AG04449 (cell line): ENCODE measurements at regions of chr6 and their contacts with region 1.

Region 1: DNA sequence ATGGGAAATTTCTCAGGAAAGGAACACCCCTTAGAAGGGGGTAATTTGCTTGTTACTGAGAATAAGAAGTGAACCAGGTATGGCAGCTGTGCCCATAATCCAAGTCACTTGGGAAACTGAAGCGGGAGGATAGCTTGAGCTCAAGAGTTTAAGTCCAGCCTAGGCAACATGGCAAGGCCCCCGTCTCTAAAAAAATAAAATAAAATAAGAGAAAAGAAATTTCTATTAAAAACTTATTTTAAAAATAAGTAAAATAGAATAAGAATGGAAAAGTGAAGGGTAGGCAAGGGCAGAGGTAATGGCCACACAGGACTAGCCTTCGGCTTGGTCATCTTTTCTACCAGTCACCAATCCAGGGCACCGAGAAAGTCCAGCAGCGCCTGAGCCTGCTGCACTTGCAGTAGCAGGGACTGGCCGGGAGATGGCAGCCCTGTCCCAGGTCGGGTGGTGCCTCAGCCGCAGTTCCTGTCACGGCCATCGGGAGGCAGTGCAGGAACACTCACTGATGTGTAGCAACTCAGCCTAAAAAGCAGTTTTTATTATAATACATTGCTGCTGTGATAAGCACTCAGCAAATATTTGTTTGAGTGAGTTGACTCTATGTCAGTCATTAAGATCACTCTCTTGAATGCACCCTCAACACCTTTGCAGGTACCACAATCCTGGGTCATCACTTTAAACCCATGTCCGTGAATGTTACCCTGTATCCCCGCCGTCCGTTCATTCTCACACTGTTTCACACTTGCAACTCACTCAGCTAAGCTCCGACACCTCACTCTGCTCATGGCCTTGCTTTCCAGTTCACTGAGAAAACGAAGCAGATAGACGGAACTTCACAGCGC is 23.2 kb upstream of the GCM1 start:
- DNase-seq: no peak
- H3K4me3 ChIP-seq: no peak overlapping the region
- CTCF ChIP-seq: peak; percentile 100

Region 2: GRCh38 chr6:52610745-52611355 is 561.0 kb before region 1 on chr6:
- CTCF ChIA-PET with region 1: no interaction called
- POLR2A ChIA-PET with region 1: no interaction called
- DNase-seq: no peak
- H3K4me3 ChIP-seq: no peak overlapping the region
- CTCF ChIP-seq: no peak

Region 3: GRCh38 chr6:53042112-53042511 is 129.7 kb before region 1 on chr6:
- CTCF ChIA-PET with region 1: no interaction called
- POLR2A ChIA-PET with region 1: no interaction called
- DNase-seq: peak; percentile 85
- H3K4me3 ChIP-seq: no peak overlapping the region
- CTCF ChIP-seq: no peak

Region 4: GRCh38 chr6:53159558-53159957 is 12.3 kb before region 1 on chr6:
- CTCF ChIA-PET with region 1: interaction called, 15 read pairs
- POLR2A ChIA-PET with region 1: no interaction called
- DNase-seq: no peak
- H3K4me3 ChIP-seq: no peak overlapping the region
- CTCF ChIP-seq: no peak

Region 5: DNA sequence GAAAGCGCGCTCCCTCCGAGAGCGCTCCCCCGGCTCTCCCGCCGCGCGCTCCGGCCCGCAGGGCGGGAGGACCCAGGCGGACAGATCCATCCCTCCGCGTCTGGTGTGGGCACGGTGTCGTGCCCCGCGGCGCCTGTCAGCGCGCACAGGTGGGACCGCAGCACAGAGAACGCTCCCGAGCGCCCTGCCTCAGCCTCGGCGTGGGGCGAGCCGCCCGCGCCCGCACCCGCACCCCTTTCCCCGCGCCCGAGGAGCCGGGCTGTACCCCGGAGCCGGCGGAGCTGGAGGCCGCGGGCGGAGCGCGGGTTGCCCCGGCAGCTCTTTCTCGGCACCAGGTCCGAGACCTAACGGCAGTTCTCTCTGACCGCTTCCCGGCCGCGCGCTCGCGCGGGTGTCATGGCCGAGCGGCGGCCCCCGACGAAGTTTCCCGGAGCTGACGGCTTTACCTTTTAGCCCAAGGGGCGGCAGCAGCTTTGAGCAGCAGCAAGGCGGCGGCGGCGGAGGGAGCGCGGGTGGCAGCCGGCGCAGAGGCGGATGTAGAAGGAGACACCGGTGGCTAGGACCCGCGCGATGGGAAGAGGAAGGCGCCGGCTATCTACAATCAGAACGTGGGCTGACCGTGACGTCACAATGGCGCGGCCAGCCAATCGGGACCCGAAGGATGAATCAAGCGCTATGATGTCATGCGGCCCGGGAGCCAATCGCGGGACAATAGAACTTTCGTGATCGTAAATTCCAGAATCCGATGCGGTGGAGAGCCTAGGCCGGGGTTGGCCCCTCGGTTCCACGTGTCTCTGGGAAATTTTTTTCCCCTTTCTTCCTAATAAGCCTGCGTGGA is 176.8 kb after region 1 on chr6 and contains the start of gene ELOVL5:
- CTCF ChIA-PET with region 1: interaction called, 24 read pairs
- POLR2A ChIA-PET with region 1: interaction called, 4 read pairs
- DNase-seq: peak; percentile 93
- H3K4me3 ChIP-seq: peak within 1 kb of the TSS; percentile 76
- CTCF ChIP-seq: no peak

Region 6: DNA sequence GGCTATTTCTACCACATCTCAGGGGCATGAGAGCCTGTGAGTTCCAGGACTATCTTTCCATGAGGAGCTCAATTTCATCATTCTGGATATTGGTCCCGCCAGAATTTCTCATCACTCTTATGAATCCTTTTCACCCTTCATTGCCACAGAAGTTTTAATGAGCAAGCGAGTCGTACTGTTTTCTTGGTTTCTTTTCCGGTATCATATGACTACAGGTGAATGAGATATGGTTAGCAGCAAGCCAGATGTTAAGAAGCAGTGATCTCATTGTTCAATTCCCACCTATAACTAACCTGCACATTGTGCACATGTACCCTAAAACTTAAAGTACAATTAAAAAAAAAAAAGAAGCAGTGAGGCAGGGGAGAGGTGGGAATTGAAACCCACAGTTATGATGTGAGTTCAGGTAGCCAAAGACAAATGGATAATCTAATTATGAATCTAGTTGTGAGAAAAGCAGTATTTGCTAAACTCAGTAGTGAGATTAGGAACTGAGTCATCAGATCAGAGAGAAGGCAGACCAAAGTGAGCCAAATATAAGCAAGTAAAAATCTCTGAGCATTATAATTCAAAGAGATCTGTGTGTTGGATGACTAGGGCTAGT is 254.9 kb after region 1 on chr6:
- CTCF ChIA-PET with region 1: interaction called, 149 read pairs
- POLR2A ChIA-PET with region 1: no interaction called
- DNase-seq: no peak
- H3K4me3 ChIP-seq: no peak overlapping the region
- CTCF ChIP-seq: no peak

Region 7: DNA sequence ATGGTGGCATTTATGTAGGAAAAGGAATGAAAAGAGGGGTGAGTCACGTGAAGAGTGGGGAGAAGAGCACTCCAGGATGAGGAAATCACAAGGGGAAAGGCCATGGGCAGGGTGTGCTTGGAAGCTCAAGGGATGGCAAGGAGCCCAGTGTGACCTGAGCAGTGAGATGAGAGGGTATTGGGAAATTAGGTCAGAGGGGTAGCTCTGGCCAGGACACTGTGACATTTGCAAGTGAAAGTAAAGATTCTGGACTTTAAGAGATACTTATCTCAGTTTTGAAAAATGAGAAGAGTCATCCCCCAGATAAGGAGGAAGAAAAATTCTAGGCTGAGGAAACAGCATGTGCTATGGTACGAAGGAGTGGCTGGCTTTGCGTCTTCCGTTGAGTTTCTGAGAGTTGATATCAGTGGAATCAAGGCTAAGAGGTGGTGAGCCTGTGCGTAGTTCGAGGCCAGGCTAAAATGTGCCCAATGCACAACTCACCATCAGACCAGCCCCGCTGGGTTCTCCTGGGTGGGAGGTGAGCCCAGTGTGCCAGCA is 293.2 kb after region 1 on chr6:
- CTCF ChIA-PET with region 1: interaction called, 12 read pairs
- POLR2A ChIA-PET with region 1: no interaction called
- DNase-seq: no peak
- H3K4me3 ChIP-seq: no peak overlapping the region
- CTCF ChIP-seq: no peak

Region 8: GRCh38 chr6:53492860-53493634 is 321.2 kb after region 1 on chr6:
- CTCF ChIA-PET with region 1: interaction called, 12 read pairs
- POLR2A ChIA-PET with region 1: no interaction called
- DNase-seq: no peak
- H3K4me3 ChIP-seq: peak overlapping the region; percentile 31
- CTCF ChIP-seq: peak; percentile 35